Sigmoid colon (tissue), 7 donors: ENCODE measurements at regions of chr10 and their contacts with region 1.

Region 1: GRCh38 chr10:58952747-58953466 is 223.5 kb upstream of the PHYHIPL start:
- DNase-seq: no peak
- H3K4me3 ChIP-seq: no peak overlapping the region
- H3K27ac ChIP-seq: peak overlapping the region; percentile 37 to 70 (median 49)
- H3K4me1 ChIP-seq: peaks cover 0 to 52% (median 38%) of the 10 kb centered on the region in 4 donors
- H3K27me3 ChIP-seq: no peaks in the 10 kb centered on the region
- CTCF ChIP-seq: peak; percentile 27 to 80 (median 64)
- EP300 ChIP-seq: no peak
- POLR2A ChIP-seq: no peak

Region 2: DNA sequence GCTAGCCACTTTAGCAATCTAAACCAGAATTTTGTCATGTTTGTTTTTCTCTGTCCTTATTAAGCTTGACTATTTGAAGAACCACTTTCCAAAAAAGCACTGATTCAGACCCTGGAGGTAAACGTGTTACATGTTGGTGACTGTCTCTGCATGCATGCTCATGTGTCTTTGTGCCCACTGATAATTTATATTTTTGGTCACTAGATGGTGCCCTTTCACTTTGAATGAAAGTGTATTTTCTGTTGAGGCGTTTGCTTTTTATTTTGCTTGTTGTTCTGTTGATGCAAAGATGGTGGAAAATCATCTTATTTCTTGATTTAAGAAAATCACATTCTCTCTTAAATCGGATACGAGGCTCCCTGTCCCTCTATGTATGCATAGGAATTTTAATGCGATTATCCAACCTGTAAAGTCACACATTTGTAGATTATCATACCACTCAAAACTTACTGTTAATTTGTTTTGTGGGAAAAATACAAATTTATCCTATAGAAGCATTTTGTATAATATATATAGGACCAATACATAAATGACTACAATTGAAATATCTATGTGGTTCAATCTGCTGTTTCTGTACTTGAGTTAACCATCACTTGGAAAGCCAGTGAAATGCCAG is 170.9 kb before region 1 on chr10:
- intact Hi-C with region 1: loop called (anchors 2 kb)
- DNase-seq: no peak
- H3K4me3 ChIP-seq: no peak overlapping the region
- H3K27ac ChIP-seq: peak overlapping the region in 1 of 4 donors; percentile 39
- H3K4me1 ChIP-seq: peaks cover 0 to 16% (median 3%) of the 10 kb centered on the region in 4 donors
- H3K27me3 ChIP-seq: no peaks in the 10 kb centered on the region
- CTCF ChIP-seq: peak in 3 of 4 experiments; percentile 37 to 64 (median 48)
- EP300 ChIP-seq: no peak
- POLR2A ChIP-seq: no peak

Region 3: DNA sequence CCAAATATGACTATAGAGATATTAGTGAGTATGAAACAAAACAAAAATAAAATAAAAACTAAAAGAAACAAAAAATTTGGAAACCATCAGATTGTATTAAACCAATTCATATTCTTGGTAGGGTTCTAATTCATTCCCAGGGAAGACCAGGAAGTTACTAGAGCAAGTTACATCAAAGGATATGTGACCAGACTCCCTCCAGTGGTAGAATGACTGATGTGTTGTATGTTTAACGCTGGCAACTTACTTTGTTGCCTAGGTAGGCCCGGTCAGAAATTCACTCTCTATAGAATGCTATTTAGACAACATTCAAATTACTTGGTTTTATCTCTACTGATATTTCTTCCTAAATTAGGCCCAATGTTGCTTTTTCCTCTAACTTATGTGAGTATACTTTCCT is 228.8 kb after region 1 on chr10:
- intact Hi-C with region 1: loop called (anchors 5 kb)
- DNase-seq: no peak
- H3K4me3 ChIP-seq: no peak overlapping the region
- H3K27ac ChIP-seq: no peak overlapping the region
- H3K4me1 ChIP-seq: peaks cover 0 to 9% (median 9%) of the 10 kb centered on the region in 4 donors
- H3K27me3 ChIP-seq: peaks cover 4 to 33% (median 25%) of the 10 kb centered on the region in 3 donors
- CTCF ChIP-seq: peak in 3 of 4 experiments; percentile 12 to 34 (median 12)
- EP300 ChIP-seq: no peak
- POLR2A ChIP-seq: no peak

Region 4: DNA sequence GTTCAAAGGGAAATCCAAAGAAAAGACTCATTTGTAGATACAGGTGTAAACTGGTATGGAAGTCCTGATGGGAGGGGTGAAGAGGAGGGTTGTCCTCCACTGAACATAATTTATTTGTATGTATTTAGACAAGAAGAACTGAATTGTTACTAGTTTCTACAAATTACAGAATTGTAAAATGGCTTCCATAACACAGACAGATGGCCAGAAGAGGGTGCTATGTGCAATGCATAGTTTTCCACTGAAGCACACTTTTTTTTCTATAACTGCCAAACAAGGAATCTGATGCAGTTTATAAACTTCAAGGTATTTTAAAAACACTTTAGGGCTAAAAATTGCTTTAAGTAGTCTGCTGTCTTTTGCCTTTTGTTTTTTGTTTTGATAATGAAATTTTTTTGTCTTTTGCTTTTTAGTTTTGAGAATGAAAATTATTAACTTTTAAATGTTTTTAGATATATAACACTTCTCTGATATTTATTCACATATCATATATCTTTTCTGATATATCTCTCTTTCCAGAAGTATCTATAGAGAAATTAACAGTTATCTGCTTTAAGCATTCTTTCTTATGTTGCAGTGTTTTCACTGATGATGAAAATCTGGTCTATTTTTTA is 282.0 kb after region 1 on chr10:
- intact Hi-C with region 1: loop called (anchors 5 kb)
- DNase-seq: no peak
- H3K4me3 ChIP-seq: no peak overlapping the region
- H3K27ac ChIP-seq: no peak overlapping the region
- H3K4me1 ChIP-seq: no peaks in the 10 kb centered on the region
- H3K27me3 ChIP-seq: no peaks in the 10 kb centered on the region
- CTCF ChIP-seq: peak in 3 of 4 experiments; percentile 17 to 53 (median 23)
- EP300 ChIP-seq: no peak
- POLR2A ChIP-seq: no peak